ENCODE measurements at regions of chr5 and their contacts with region 1.

Region 1: GRCh38 chr5:39578887-39579497 is 154.2 kb upstream of the DAB2 start:
- DNase-seq: no peak
- H3K4me3 ChIP-seq: no peak overlapping the region
- H3K27ac ChIP-seq: no peak overlapping the region
- H3K4me1 ChIP-seq: no peaks in the 10 kb centered on the region
- H3K27me3 ChIP-seq: no peaks in the 10 kb centered on the region
- CTCF ChIP-seq: peak; percentile 37 to 59

Region 2: DNA sequence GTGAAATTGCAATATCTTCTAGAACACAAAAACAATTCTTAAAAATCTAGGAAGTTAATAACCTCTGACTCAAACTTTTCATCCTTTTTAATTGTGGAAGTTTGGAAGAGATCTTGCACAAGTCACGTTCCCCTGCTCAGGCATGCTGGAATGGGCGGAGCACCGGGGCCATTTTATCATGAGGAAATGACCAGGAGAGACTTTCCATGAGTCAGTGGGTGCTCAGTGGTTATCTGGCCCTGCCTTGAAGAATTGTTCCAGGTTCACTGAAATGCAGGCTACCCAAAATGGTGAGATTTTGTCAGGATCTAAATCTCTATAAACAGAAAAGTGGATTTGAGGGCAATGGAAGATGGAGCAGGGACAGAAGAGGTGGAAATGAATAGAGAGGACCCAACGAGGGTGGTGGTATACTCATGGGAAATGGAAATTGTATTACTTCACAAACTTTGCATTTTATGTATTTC is 420.8 kb before region 1 on chr5:
- intact Hi-C with region 1: no loop called
- DNase-seq: peak; percentile 25 to 64
- H3K4me3 ChIP-seq: no peak overlapping the region
- H3K27ac ChIP-seq: no peak overlapping the region
- H3K4me1 ChIP-seq: no peaks in the 10 kb centered on the region
- H3K27me3 ChIP-seq: no peaks in the 10 kb centered on the region
- CTCF ChIP-seq: no peak

Region 3: GRCh38 chr5:39547553-39548154 is 31.3 kb before region 1 on chr5:
- intact Hi-C with region 1: no loop called
- DNase-seq: no peak
- H3K4me3 ChIP-seq: no peak overlapping the region
- H3K27ac ChIP-seq: no peak overlapping the region
- H3K4me1 ChIP-seq: peaks cover 0 to 7% (median 1%) of the 10 kb centered on the region in 4 donors
- H3K27me3 ChIP-seq: no peaks in the 10 kb centered on the region
- CTCF ChIP-seq: peak; percentile 70 to 80

Region 4: GRCh38 chr5:40736103-40736875 is 1157.3 kb after region 1 on chr5:
- intact Hi-C with region 1: loop called (anchors 5 kb)
- DNase-seq: no peak
- H3K4me3 ChIP-seq: no peak overlapping the region
- H3K27ac ChIP-seq: no peak overlapping the region
- H3K4me1 ChIP-seq: peaks cover 0 to 19% (median 2%) of the 10 kb centered on the region in 4 donors
- H3K27me3 ChIP-seq: no peaks in the 10 kb centered on the region
- CTCF ChIP-seq: peak; percentile 55 to 68